PC-9 (cell line): ENCODE measurements at regions of chr10 and their contacts with region 1.

Region 1: DNA sequence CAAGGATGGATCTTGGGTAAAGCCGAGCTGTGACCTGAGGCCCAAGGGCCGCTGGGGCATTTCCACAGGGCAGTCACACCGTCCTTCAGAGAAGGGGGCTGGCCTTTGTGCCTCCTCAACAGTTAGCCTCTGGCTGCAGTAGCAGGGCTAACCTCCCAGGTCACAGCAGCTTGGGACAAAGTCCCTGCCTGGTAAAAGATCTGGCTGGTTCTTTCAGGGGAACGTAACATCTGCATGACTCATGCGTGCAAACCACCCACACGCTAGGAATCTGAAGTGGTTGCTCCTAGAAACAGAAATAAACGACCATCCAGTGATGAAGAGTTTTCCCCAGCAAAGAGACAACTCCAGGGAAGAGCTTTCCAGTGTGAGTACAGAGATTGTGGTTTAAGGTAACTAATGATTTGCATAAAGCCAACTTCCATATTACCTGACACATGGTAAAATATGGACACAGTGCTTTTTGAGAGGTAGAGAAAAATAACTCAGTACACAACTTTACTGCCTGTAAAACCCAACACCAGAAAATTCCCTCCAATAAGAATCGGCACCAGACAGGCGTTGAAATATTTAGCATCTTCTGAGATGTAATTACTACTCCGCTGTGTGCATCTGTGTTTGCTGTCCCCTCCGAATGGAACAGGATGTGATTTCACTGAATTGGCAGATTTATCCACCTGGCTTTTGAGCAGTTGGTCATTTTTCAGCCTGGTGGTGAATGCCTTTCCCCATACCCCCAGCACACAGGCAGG is 84.9 kb upstream of the ADRB1 start:
- DNase-seq: peak; percentile 73 to 76
- H3K4me3 ChIP-seq: no peak overlapping the region
- H3K27ac ChIP-seq: no peak overlapping the region
- H3K4me1 ChIP-seq: peaks cover 27% of the 10 kb centered on the region
- H3K27me3 ChIP-seq: no peaks in the 10 kb centered on the region
- CTCF ChIP-seq: no peak

Region 2: DNA sequence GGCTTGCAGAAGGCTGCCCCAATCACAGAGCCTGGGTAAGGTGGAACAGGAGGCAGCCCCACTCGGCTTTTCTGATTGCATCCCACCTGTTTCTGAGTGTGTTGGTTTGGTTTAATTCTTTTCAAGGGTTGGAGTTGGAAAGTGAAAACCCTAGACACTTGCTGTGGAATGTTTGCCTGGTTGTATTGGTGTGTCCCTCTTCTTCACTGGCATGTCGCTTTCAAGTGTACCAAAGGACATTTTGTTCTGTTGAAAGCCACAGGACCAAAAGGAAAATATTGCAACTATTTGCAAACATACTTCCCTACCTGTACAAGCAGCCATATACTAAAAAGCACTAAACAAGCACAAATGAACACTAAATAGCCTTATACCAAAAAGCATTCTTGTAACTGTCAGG is 43.9 kb before region 1 on chr10:
- CTCF ChIA-PET with region 1: no interaction called
- POLR2A ChIA-PET with region 1: no interaction called
- intact Hi-C with region 1: loop called (anchors 5 kb)
- DNase-seq: no peak
- H3K4me3 ChIP-seq: no peak overlapping the region
- H3K27ac ChIP-seq: peak overlapping the region; percentile 63
- H3K4me1 ChIP-seq: peaks cover 9% of the 10 kb centered on the region
- H3K27me3 ChIP-seq: no peaks in the 10 kb centered on the region
- CTCF ChIP-seq: no peak

Region 3: DNA sequence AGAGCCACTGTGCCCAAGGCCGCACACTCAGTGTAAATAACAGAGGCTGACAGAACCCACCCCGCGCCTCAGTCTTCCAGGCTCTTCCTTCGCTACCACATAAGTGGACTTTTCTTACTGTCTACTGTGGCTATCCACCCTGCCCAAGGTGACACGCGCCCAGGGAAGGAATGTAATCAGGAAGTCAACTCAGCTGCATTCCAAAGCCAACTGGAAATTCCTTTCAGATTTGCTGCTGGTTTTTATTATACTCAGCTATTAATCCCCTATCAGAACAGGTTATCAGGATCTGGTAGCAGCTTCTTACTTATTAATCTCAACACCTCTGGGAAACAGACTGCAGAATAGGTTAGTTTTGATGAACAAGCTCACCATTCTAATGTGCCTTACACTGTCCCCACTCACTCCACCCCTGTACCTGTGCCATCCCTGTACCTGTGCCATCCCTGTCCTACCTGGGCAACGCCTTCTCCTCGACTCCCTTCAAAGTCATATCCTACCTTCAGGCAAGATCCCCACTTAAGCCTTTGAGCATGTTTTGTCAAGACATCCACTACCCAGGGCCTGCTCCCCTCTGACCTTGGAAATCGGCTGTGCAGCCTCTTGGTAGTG is 13.6 kb before region 1 on chr10:
- CTCF ChIA-PET with region 1: interaction called, 5 read pairs
- POLR2A ChIA-PET with region 1: no interaction called
- intact Hi-C with region 1: loop called (anchors 1 kb)
- DNase-seq: peak; percentile 56 to 80
- H3K4me3 ChIP-seq: no peak overlapping the region
- H3K27ac ChIP-seq: peak overlapping the region; percentile 58; the same call in 1 of the 2 replicates
- H3K4me1 ChIP-seq: peaks cover 37% of the 10 kb centered on the region
- H3K27me3 ChIP-seq: no peaks in the 10 kb centered on the region
- CTCF ChIP-seq: no peak

Region 4: GRCh38 chr10:113982769-113983168 is 24.0 kb after region 1 on chr10:
- CTCF ChIA-PET with region 1: interaction called, 5 read pairs
- POLR2A ChIA-PET with region 1: interaction called, 4 read pairs
- intact Hi-C with region 1: loop called (anchors 2 kb)
- DNase-seq: peak; percentile 75 to 82
- H3K4me3 ChIP-seq: no peak overlapping the region
- H3K27ac ChIP-seq: peak overlapping the region; percentile 72
- H3K4me1 ChIP-seq: peaks cover 28% of the 10 kb centered on the region
- H3K27me3 ChIP-seq: no peaks in the 10 kb centered on the region
- CTCF ChIP-seq: no peak; the same call in 1 of the 2 replicates

Region 5: GRCh38 chr10:114002422-114002821 is 43.6 kb after region 1 on chr10:
- CTCF ChIA-PET with region 1: no interaction called
- POLR2A ChIA-PET with region 1: no interaction called
- intact Hi-C with region 1: no loop called
- DNase-seq: no peak
- H3K4me3 ChIP-seq: no peak overlapping the region
- H3K27ac ChIP-seq: no peak overlapping the region
- H3K4me1 ChIP-seq: no peaks in the 10 kb centered on the region
- H3K27me3 ChIP-seq: no peaks in the 10 kb centered on the region
- CTCF ChIP-seq: no peak

Region 6: GRCh38 chr10:114043532-114044246 is 84.9 kb after region 1 on chr10 and contains the start of gene ADRB1:
- CTCF ChIA-PET with region 1: no interaction called
- POLR2A ChIA-PET with region 1: no interaction called
- intact Hi-C with region 1: loop called (anchors 1 kb)
- DNase-seq: peak; percentile 58 to 76
- H3K4me3 ChIP-seq: peak within 1 kb of the TSS; percentile 71
- H3K27ac ChIP-seq: no peak within 1 kb of the TSS
- H3K4me1 ChIP-seq: peaks cover 5% of the 10 kb centered on the region
- H3K27me3 ChIP-seq: no peaks in the 10 kb centered on the region
- CTCF ChIP-seq: no peak
- total RNA-seq, gene ADRB1: 0.45 and 0.48 TPM in 2 replicates